SK-N-SH (cell line): ENCODE measurements at regions of chr1 and their contacts with region 1.

Region 1: DNA sequence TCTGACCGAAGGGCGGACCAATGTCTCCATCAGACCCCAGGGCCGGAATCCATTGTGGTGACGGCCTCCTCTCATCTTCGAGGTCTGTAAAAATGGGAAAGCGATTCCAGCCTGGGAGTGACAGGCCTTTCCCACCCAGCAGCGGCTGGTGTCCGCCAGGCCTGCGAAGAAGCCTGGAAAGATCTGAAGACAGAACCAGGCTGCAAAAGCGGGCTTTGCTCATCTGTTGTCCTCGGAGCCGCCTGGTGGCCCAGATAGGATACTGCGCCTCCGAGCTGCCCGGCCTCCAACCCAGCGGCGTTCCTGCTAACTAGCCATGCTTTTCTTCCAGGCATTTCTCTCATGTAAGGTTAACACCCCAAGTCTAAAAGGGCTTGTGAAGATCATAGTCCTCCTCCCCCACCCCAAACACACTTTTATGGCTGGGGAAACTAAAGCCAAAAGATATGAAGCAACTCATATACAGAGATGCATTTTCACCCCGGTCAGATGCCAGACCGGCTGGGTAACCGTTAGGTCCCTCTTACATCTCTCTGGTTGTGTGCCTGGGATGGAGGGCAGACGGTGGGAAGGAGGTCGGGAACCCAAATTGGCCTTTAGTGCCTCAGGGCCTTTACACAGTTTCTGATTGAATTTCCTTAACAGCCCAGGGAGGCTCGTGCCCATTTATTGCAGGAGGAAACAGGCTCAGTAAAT is 1.9 kb upstream of the DHRS3 start:
- DNase-seq: peak; percentile 88
- H3K4me3 ChIP-seq: peak overlapping the region in 1 of 2 experiments; percentile 15; a peak in 2 of 4 replicates
- H3K27ac ChIP-seq: peak overlapping the region; percentile 70 to 79
- H3K4me1 ChIP-seq: peaks cover 29 to 37% of the 10 kb centered on the region in 2 experiments; a peak in 3 of 4 replicates
- H3K27me3 ChIP-seq: no peaks in the 10 kb centered on the region
- CTCF ChIP-seq: peak; percentile 93
- EP300 ChIP-seq: no peak
- RAD21 ChIP-seq: peak; percentile 99

Region 2: DNA sequence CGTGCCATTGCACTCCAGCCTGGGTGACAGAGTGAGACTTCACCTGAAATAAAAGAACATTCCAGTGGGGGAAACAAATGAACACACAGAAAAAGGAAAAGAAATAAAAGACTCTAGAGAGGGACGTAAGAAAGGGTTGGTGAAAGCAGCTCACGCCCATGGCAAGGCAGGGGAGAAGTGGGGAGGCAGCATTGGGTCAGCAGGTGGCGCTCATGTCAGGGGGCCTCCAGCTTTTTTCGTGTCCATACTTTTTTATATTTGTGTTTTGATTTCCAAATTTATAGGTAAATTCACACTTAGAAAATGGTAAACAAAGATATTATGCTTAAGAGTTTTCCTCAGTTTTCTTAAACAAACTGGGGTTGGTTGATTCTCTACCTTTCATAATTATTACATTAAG is 344.6 kb before region 1 on chr1:
- CTCF ChIA-PET with region 1: interaction called, 33 read pairs
- POLR2A ChIA-PET with region 1: no interaction called
- DNase-seq: peak; percentile 37
- H3K4me3 ChIP-seq: no peak overlapping the region; a peak in 1 of 4 replicates
- H3K27ac ChIP-seq: no peak overlapping the region
- H3K4me1 ChIP-seq: no peaks in the 10 kb centered on the region
- H3K27me3 ChIP-seq: no peaks in the 10 kb centered on the region
- CTCF ChIP-seq: peak; percentile 70
- EP300 ChIP-seq: no peak
- RAD21 ChIP-seq: peak; percentile 57

Region 3: GRCh38 chr1:12320516-12320915 is 299.4 kb before region 1 on chr1:
- CTCF ChIA-PET with region 1: interaction called, 135 read pairs
- POLR2A ChIA-PET with region 1: no interaction called
- DNase-seq: no peak
- H3K4me3 ChIP-seq: no peak overlapping the region
- H3K27ac ChIP-seq: no peak overlapping the region
- H3K4me1 ChIP-seq: no peaks in the 10 kb centered on the region; a peak in 1 of 4 replicates
- H3K27me3 ChIP-seq: no peaks in the 10 kb centered on the region
- CTCF ChIP-seq: no peak
- EP300 ChIP-seq: no peak
- RAD21 ChIP-seq: no peak

Region 4: DNA sequence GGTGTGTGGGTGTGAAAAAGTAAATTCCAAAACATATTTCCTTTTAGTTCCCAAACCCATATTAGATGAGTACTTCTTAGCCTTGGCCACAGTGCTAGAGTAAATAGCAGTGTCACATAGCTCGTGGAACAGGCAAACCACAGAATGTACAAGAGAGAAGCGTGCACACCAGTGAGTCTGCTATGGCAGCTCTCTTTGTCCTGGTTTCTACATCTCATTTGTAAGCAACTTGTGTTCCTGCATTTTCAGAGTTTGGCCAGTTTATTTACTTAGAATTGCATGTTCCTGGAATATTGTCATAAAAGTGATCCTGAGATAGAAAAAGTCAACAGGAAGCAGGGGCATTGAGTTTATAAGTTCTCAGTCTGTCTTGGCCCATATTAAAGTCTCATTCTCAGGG is 144.0 kb before region 1 on chr1:
- CTCF ChIA-PET with region 1: interaction called, 11 read pairs
- POLR2A ChIA-PET with region 1: interaction called, 3 read pairs
- DNase-seq: no peak
- H3K4me3 ChIP-seq: no peak overlapping the region
- H3K27ac ChIP-seq: peak overlapping the region in 1 of 2 experiments; percentile 2; a peak in 1 of 4 replicates
- H3K4me1 ChIP-seq: peaks cover 27 to 72% of the 10 kb centered on the region in 2 experiments
- H3K27me3 ChIP-seq: no peaks in the 10 kb centered on the region
- CTCF ChIP-seq: no peak
- EP300 ChIP-seq: no peak
- RAD21 ChIP-seq: no peak

Region 5: GRCh38 chr1:12604114-12604874 is 15.6 kb before region 1 on chr1:
- CTCF ChIA-PET with region 1: interaction called, 12 read pairs
- POLR2A ChIA-PET with region 1: no interaction called
- DNase-seq: peak; percentile 64
- H3K4me3 ChIP-seq: no peak overlapping the region
- H3K27ac ChIP-seq: peak overlapping the region; percentile 78
- H3K4me1 ChIP-seq: peaks cover 33 to 44% of the 10 kb centered on the region in 2 experiments
- H3K27me3 ChIP-seq: no peaks in the 10 kb centered on the region
- CTCF ChIP-seq: no peak
- EP300 ChIP-seq: peak; percentile 68 to 89
- RAD21 ChIP-seq: 0 out of 2 replicates have a peak, but pooled peaks have one; percentile 3

Region 6: GRCh38 chr1:12658531-12659453 is 38.9 kb after region 1 on chr1:
- CTCF ChIA-PET with region 1: interaction called, 24 read pairs
- POLR2A ChIA-PET with region 1: no interaction called
- DNase-seq: peak; percentile 89
- H3K4me3 ChIP-seq: peak overlapping the region in 1 of 2 experiments; percentile 34; a peak in 1 of 4 replicates
- H3K27ac ChIP-seq: no peak overlapping the region
- H3K4me1 ChIP-seq: no peaks in the 10 kb centered on the region
- H3K27me3 ChIP-seq: no peaks in the 10 kb centered on the region
- CTCF ChIP-seq: peak; percentile 89
- EP300 ChIP-seq: no peak
- RAD21 ChIP-seq: peak; percentile 94